Esophagus squamous epithelium (tissue), 5 donors: ENCODE measurements at regions of chr3 and their contacts with region 1.

Region 1: DNA sequence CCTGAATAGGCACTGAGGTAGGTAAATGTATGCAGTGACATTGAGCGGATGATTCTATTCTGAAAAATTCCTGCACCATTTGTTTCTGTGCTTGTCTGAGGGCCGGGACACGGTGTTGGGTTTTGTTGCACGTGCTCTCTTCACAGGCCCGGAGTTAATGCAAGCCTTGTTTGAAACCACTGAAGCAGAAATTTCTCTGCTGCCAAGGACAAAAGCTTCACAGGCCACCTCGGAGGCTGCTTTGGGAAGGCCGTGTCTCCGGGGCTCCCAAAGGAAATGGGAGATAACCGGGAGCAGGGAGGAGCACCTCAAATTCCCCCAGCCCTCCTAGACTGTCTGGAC is 179.4 kb downstream of the OPA1 start:
- DNase-seq: no peak
- H3K4me3 ChIP-seq: no peak overlapping the region
- H3K27ac ChIP-seq: no peak overlapping the region
- H3K4me1 ChIP-seq: no peaks in the 10 kb centered on the region
- H3K27me3 ChIP-seq: peaks cover 0 to 37% (median 0%) of the 10 kb centered on the region in 4 donors
- CTCF ChIP-seq: no peak
- POLR2A ChIP-seq: no peak

Region 2: DNA sequence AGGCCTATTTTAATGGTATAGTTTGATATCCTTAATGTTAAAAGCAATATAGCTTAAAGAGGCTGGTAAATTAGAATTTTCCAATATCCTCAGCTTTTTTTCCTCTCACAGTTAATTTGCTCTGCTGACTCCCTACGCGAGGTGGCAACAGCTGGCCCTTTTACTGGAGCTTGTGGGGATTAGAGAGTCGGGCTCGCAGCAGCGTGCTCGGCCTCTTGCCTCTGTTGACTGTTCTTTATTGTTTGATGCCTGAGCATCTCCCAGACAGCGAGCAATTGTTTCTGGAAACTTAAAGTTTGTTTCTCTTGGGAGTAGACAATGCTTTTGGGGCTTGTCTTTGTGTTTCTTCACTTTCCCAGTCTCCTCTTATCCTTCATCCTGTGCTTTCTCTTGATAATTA is 98.5 kb before region 1 on chr3:
- intact Hi-C with region 1: loop called (anchors 10 kb)
- DNase-seq: no peak
- H3K4me3 ChIP-seq: no peak overlapping the region
- H3K27ac ChIP-seq: no peak overlapping the region
- H3K4me1 ChIP-seq: no peaks in the 10 kb centered on the region
- H3K27me3 ChIP-seq: no peaks in the 10 kb centered on the region
- CTCF ChIP-seq: no peak
- POLR2A ChIP-seq: no peak

Region 3: DNA sequence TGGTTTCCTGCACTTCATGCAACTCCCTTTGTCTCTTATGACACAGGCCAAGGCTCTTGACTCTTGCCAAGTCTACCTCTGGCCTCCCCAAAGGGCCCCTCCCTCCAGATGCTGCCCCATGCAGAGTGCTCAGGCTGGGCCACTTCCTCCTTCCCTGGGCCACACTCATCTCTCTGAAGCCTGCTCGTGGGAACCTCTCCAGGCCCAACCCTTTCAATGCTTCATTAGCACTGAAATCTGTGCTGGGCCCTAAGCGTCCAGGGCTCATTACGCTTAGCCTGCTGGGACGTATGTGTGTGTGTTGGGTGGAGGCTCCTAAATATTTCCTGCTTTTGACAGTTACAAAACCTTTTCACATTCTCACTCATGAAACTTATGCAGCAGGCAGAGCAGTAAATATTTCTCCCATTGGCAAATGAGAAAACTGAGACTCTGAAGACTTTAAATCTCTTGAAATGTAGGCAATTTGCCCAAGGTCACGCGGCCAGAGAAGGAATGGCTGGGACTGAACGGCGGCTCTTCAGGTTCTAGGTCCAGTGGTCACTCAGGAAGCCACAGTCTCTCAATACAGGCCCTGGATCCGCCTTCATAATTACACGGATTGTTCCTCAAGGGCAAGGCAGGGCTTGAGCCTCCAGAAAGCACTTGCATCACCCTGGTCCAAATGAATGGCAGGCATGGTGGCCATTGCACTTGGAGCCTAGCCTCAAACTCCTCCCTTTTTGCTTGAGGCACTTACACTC is 121.9 kb after region 1 on chr3:
- intact Hi-C with region 1: no loop called
- DNase-seq: no peak
- H3K4me3 ChIP-seq: no peak overlapping the region
- H3K27ac ChIP-seq: peak overlapping the region; percentile 71 to 88 (median 86)
- H3K4me1 ChIP-seq: peaks cover 4 to 42% (median 26%) of the 10 kb centered on the region in 3 donors
- H3K27me3 ChIP-seq: no peaks in the 10 kb centered on the region
- CTCF ChIP-seq: peak in 1 of 6 experiments; percentile 10
- POLR2A ChIP-seq: no peak